HepG2 (cell line): ENCODE measurements at regions of chr5 and their contacts with region 1.

Region 1: DNA sequence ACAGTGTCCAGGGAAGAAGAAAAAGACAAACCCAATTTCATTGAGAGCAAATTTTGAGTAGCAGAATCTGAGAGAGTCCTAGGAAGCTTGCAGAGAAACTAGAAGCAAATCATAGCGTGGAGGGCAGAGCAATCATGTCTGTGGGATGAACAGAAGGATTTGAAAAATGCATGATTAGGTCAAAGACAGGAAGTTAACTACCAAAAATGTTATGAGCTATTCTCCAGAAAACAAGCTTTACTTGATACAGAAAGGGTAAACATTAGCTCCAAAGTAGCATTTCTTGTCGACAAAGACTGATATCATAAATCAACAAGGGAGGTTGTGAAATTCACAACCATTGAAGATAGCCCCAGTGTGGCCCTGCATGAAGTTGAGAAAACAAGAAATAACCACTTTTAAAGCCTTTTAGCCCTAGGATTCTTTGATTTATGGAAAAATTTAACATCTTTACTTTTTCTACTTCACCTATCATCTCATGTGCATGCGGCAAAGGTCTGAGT is 97.7 kb upstream of the MEGF10 start:
- DNase-seq: no peak
- ATAC-seq: no peak
- H3K4me3 ChIP-seq: no peak overlapping the region
- H3K27ac ChIP-seq: no peak overlapping the region
- H3K4me1 ChIP-seq: peaks cover 11% of the 10 kb centered on the region
- H3K27me3 ChIP-seq: no peaks in the 10 kb centered on the region; a peak in 1 of 5 replicates
- CTCF ChIP-seq: no peak
- EP300 ChIP-seq: no peak
- POLR2A ChIP-seq: no peak
- RAD21 ChIP-seq: no peak

Region 2: DNA sequence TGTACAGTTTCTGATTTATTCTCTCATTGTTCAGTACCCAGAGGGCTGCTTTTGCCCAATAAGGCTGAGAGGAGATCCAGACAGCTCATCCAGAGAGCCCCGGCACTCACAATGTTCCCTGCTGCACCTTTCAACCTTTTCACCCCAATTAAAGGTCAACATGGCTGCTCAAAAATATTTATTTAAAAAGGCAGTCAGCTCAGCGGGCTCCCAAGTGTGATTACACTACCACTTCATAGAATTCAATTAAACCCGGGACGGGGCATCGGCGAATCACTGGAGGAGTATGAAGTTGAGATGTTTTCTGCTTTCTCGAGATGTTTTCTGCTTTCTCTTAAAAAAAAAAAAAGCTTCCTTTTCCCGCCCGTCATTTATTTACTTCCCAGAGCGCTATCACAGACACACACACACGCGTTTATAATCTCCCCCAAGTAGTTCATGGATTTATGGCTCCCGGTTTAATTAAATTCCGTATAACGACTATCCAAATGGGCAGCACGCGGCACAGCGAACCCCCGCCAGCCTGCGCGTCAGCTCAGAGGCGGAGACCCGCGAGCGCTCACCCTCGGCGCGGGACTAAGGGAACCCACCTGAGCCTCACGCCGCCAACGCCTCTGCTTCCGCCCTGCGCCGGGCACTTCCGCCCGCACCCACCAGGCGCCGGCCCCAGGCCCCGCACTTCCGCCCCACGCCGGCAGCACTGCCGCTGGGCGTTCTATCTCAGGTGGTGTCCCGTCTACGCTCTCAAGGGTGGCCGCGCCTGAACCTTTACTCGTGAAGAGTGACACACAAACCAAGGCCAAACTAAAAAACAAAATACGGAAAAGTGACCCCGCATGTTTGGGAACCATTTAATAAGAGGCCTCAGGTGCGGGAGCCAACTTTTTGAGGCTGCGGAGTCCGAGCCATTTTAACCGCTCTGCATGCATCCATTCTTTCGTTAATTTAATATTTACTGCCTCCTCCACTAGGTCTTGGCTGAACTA is 119.7 kb before region 1 on chr5 and contains the start of gene C5orf63:
- CTCF ChIA-PET with region 1: no interaction called
- POLR2A ChIA-PET with region 1: no interaction called
- in situ Hi-C with region 1: no loop called
- intact Hi-C with region 1: loop called (anchors 10 kb)
- DNase-seq: peak; percentile 61
- ATAC-seq: peak; percentile 100
- H3K4me3 ChIP-seq: peak within 1 kb of the TSS; percentile 67 to 74 (median 68)
- H3K27ac ChIP-seq: peak within 1 kb of the TSS; percentile 57
- H3K4me1 ChIP-seq: peaks cover 49% of the 10 kb centered on the region
- H3K27me3 ChIP-seq: 0 out of 5 replicates have a peak, but pooled peaks cover 0 to 1% of the 10 kb centered on the region in 2 experiments
- CTCF ChIP-seq: peak; percentile 16; the same call in 1 of the 2 replicates
- EP300 ChIP-seq: 0 out of 4 replicates have a peak, but pooled peaks of 1 of the 2 experiments have one; percentile 9
- POLR2A ChIP-seq: peak; percentile 64 to 86
- RAD21 ChIP-seq: peak; percentile 36
- total RNA-seq, gene C5orf63: 8.8 and 9.1 TPM in 2 replicates